MCF 10A (cell line): ENCODE measurements at regions of chr2 and their contacts with region 1.

Region 1: DNA sequence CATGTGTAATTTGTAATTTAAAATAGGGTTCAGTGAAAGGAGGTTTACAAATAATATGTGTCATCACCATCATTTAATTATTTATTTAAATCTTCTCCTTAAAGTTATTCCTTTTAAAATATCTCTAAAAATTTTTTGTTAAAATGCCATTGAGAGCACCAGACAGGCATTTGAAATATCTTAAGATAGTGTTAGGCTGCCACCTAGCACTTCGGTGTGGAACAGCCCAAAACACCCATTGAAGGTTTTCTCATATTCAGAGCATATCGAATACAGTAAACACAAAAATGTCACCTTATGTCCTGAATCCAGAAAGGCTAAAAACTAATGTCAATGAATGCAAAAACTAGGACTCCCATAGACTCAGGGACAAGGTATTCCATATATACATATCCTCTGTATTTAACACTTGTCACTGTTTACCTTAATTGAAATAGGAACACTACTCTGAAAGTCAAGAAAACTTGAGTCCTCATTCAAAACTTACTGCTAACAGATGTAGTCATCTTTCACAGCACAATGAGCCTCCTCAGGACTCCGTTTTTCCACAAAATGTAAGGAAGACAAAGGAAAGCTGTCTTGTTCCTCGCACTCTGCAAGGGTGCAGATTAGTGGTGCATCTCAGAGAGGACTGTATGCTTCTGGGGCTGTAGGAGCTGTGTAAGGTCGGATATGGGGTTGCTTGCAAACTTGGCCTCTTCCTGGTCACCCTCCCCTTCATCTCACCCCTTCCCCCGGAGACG is 329.5 kb downstream of the PAX3 start:
- DNase-seq: peak; percentile 54
- H3K4me3 Mint-ChIP-seq: no peak overlapping the region
- H3K27ac Mint-ChIP-seq: no peak overlapping the region
- H3K4me1 Mint-ChIP-seq: no peaks in the 10 kb centered on the region
- H3K27me3 Mint-ChIP-seq: no peaks in the 10 kb centered on the region
- CTCF ChIP-seq: peak; percentile 64

Region 2: DNA sequence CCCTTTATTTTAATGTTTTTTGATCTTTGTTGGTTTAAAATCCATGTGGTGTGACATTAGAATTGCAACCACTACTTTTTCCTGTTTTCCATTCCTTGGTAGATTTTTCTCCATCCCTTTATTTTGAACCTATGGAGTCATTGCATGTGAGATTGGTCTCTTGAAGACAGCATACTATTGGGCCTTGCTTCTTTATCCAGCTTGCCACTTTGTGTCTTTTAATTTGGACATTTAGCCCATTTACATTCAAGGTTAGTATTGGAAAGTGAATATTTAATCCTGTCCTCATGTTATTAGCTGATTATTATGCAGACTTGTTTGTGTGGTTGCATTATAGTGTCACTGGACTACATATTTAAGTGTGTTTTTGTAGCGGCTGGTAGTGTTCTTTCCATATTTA is 1559.0 kb before region 1 on chr2:
- CTCF ChIA-PET with region 1: no interaction called
- POLR2A ChIA-PET with region 1: no interaction called
- intact Hi-C with region 1: no loop called
- DNase-seq: no peak
- H3K4me3 Mint-ChIP-seq: no peak overlapping the region
- H3K27ac Mint-ChIP-seq: no peak overlapping the region
- H3K4me1 Mint-ChIP-seq: peaks cover 6% of the 10 kb centered on the region
- H3K27me3 Mint-ChIP-seq: no peaks in the 10 kb centered on the region
- CTCF ChIP-seq: no peak

Region 3: DNA sequence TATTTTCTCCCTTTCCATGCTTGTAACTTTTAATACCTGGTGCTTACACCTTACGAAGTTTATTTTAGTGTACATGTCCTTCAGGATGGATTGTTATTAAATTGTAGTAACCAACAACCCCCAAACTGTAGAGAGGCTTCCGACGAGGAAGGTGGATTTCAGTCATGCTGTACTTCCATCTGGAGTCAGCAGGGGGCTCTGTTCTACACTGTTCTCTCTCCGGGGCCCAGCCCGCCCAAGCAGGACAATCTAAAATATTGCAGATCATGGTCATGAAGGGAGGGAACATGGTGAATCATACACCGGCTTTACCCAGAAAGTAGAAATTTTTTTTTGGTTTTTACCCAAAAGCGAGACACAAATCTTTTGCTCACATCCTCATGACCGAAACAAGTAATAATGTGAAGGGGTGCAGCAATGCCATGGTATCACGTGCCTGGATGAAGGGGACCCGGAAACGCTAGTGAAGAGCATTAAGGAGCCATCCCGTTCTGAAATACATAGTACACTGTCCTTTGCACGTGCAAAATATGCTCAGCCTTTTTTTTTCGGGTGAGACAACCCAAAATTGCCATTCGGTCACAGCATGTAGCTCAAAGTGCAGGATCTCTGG is 1281.9 kb before region 1 on chr2:
- CTCF ChIA-PET with region 1: no interaction called
- POLR2A ChIA-PET with region 1: no interaction called
- intact Hi-C with region 1: loop called (anchors 1 kb)
- DNase-seq: peak; percentile 68
- H3K4me3 Mint-ChIP-seq: no peak overlapping the region
- H3K27ac Mint-ChIP-seq: no peak overlapping the region
- H3K4me1 Mint-ChIP-seq: peaks cover 5% of the 10 kb centered on the region
- H3K27me3 Mint-ChIP-seq: no peaks in the 10 kb centered on the region
- CTCF ChIP-seq: peak; percentile 93

Region 4: DNA sequence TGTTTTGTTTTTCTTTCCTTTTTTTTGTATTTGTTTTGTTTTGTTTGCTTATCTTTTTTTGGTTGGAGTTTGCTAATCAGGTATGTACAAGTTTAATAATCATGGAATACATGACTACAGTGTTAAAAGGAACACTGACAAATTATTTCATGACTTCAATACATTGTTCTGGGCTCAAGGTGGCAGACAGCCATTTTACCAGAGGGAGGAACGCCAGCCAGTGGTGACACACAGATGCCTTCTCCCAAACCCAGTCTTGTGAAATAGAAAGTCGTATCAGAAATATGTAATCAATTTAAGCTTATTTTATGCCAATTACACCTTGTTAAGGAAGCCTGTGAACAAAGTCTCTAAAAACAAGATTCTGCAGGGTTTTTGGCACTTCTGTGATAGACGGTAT is 133.2 kb before region 1 on chr2:
- CTCF ChIA-PET with region 1: interaction called, 6 read pairs
- POLR2A ChIA-PET with region 1: no interaction called
- intact Hi-C with region 1: loop called (anchors 10 kb)
- DNase-seq: peak; percentile 29
- H3K4me3 Mint-ChIP-seq: no peak overlapping the region
- H3K27ac Mint-ChIP-seq: no peak overlapping the region
- H3K4me1 Mint-ChIP-seq: peaks cover 6% of the 10 kb centered on the region
- H3K27me3 Mint-ChIP-seq: no peaks in the 10 kb centered on the region
- CTCF ChIP-seq: no peak